T-cell (primary cell): ENCODE measurements at regions of chr4 and their contacts with region 1.

Region 1: DNA sequence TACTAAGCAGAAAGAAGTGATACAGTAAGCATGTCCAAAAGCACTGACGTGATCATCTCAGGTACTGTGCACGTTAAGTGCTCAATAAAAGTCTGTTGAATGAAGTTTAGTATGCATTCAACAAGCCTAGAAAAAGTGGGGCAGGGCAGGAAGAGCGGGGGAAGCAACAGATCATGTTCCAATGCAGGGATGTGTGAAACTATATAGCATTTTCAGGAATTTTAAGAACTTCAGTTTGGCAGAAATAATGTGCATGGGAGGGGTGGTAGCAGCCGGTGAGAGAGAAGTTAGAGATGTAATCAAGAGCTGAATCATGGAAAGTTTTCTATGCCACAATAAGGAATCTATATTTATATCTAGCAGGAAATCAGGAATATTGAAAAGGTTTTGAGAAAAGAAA is 19.2 kb upstream of the CCNA2 start:
- DNase-seq: no peak
- ATAC-seq: no peak
- H3K4me3 ChIP-seq: no peak overlapping the region
- H3K4me3 Mint-ChIP-seq: no peak overlapping the region
- H3K27ac ChIP-seq: no peak overlapping the region
- H3K27ac Mint-ChIP-seq: no peak overlapping the region
- H3K4me1 ChIP-seq: no peaks in the 10 kb centered on the region
- H3K4me1 Mint-ChIP-seq: no peaks in the 10 kb centered on the region
- H3K27me3 ChIP-seq: no peaks in the 10 kb centered on the region
- H3K27me3 Mint-ChIP-seq: no peaks in the 10 kb centered on the region

Region 2: DNA sequence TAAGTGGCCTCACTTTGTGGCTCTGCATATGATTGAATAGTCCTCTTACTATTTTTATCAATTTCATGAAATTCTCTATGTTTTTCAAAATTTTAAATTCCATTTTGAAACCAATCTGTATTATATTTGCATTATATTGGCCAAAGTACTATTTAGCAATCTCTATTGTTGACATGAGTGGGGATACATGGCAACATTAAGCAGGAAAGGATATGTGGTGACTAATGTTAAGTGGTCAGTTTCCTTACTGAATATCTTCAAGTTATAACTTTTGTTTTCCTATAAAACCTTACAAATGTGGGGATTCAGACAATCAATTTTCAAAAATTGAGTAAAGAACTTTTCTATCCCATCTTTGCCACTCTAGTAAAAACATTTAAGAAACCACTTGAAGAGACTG is 17.3 kb after region 1 on chr4:
- CTCF ChIA-PET with region 1: no interaction called
- POLR2A ChIA-PET with region 1: no interaction called
- DNase-seq: no peak
- ATAC-seq: no peak
- H3K4me3 ChIP-seq: no peak overlapping the region
- H3K4me3 Mint-ChIP-seq: no peak overlapping the region
- H3K27ac ChIP-seq: no peak overlapping the region
- H3K27ac Mint-ChIP-seq: no peak overlapping the region
- H3K4me1 ChIP-seq: no peaks in the 10 kb centered on the region
- H3K4me1 Mint-ChIP-seq: peaks cover 0 to 2% (median 0%) of the 10 kb centered on the region in 3 donors
- H3K27me3 ChIP-seq: no peaks in the 10 kb centered on the region
- H3K27me3 Mint-ChIP-seq: no peaks in the 10 kb centered on the region

Region 3: GRCh38 chr4:121900132-121900983 is 57.5 kb after region 1 on chr4:
- CTCF ChIA-PET with region 1: interaction called in 1 of 2 experiments, 12 read pairs
- POLR2A ChIA-PET with region 1: no interaction called
- DNase-seq: peak in 32 of 35 experiments; percentile 7 to 76 (median 34)
- ATAC-seq: peak; percentile 75 to 87 (median 79)
- H3K4me3 ChIP-seq: no peak overlapping the region
- H3K4me3 Mint-ChIP-seq: no peak overlapping the region
- H3K27ac ChIP-seq: no peak overlapping the region
- H3K27ac Mint-ChIP-seq: peak overlapping the region in 1 of 2 donors; percentile 76
- H3K4me1 ChIP-seq: peaks cover 0 to 2% of the 10 kb centered on the region in 2 experiments
- H3K4me1 Mint-ChIP-seq: peaks cover 6 to 13% (median 9%) of the 10 kb centered on the region in 3 donors
- H3K27me3 ChIP-seq: no peaks in the 10 kb centered on the region
- H3K27me3 Mint-ChIP-seq: peaks cover 0 to 12% of the 10 kb centered on the region in 2 donors